Activated T-helper 2 cell treated with anti-CD3 and anti-CD28 coated beads, Interferon-gamma antibody, Interleukin-2, Interleukin-4, amounts not matched to agents 10 μg/mL and 5 μg/mL and 100 μg/mL, durations not matched to agents 14 hours and 24 hours and 36 hours (primary cell): ENCODE measurements at regions of chr12 and their contacts with region 1.

Region 1: GRCh38 chr12:121399391-121400331 is at the start of gene RNF34:
- DNase-seq: peak; percentile 99
- H3K4me3 Mint-ChIP-seq: peak within 1 kb of the TSS; percentile 97
- H3K27ac Mint-ChIP-seq: peak within 1 kb of the TSS; percentile 96
- H3K4me1 Mint-ChIP-seq: peaks cover 31% of the 10 kb centered on the region
- H3K27me3 Mint-ChIP-seq: no peaks in the 10 kb centered on the region
- total RNA-seq, gene RNF34: 74.1 and 78.3 TPM in 2 replicates

Region 2: GRCh38 chr12:121223292-121224285 is 176.1 kb before region 1 on chr12:
- intact Hi-C with region 1: no loop called
- DNase-seq: peak; percentile 46
- H3K4me3 Mint-ChIP-seq: peak overlapping the region; percentile 2
- H3K27ac Mint-ChIP-seq: peak overlapping the region; percentile 84
- H3K4me1 Mint-ChIP-seq: peaks cover 32% of the 10 kb centered on the region
- H3K27me3 Mint-ChIP-seq: no peaks in the 10 kb centered on the region

Region 3: DNA sequence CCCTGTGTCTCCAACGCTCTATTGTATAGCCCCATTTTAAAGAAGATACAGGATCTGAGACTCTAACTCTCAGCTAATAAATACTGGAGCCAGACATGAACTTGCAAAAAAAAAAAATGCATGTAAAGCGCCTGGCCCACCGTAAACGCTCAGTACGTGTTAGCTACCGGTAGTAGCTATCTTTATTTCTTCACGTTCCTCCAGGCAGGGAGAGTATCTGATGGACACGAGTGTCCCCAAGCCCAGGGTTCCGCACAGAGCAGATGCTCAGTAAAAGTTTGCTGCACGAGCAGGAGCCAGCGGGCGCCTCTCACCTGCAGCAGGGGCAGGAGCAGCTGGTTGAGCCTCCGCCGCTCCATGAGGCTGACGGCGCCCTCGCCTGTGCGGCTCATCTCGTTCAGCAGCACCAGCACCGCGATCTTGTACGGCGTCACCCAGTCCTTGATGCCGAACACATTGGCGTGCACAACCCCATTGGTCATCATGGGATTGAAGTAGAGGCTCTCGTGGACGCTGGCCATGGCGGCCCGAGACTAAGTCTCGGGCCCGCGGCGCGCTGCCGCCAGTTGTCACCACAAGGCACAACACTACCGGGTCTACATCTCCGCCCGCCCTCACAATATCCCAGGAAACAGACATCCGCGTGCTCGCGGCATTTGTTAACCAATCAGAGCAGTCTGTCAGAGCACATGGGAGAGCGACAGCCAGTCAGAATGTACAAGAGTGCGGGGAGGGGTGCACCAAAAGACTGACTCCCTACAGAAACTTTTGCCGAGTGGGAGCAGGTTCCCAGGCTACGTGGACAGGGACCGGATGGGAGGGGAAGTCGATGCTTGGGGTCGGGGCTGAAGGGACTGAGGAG is 47.6 kb before region 1 on chr12 and contains the start of gene ANAPC5:
- intact Hi-C with region 1: loop called (anchors 1 kb)
- DNase-seq: peak; percentile 92
- H3K4me3 Mint-ChIP-seq: peak within 1 kb of the TSS; percentile 95
- H3K27ac Mint-ChIP-seq: peak within 1 kb of the TSS; percentile 97
- H3K4me1 Mint-ChIP-seq: peaks cover 20% of the 10 kb centered on the region
- H3K27me3 Mint-ChIP-seq: peaks cover under 1% of the 10 kb centered on the region
- total RNA-seq, gene ANAPC5: 132 and 135 TPM in 2 replicates

Region 4: DNA sequence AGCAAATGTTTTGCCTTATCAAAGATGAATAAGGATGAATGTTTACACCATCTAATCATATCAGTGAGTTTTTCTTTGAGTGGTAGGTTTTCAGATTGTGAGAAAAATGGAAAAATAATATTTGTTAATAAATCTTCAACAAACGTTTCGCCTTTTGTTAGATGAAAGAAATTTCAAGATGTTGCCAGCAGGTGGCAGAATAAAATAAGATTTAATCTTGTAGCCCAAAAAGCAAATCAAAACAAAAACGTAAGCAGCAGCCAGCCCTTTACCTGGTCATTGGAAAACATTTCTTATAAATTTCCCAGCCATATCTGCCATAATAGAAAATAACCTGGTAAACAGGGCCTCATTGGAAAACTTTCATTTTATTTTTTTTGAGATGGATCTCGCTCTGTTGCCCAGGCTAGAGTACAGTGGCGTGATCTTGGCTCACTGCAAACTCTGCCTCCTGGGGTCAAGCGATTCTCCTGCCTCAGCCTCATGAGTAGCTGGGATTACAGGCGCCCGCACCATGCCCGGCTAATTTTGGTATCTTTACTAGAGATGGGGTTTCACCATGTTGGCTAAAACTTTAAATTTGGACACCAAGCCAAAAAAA is 297.5 kb after region 1 on chr12:
- intact Hi-C with region 1: no loop called
- DNase-seq: no peak
- H3K4me3 Mint-ChIP-seq: no peak overlapping the region
- H3K27ac Mint-ChIP-seq: no peak overlapping the region
- H3K4me1 Mint-ChIP-seq: peaks cover 1% of the 10 kb centered on the region
- H3K27me3 Mint-ChIP-seq: peaks cover 6% of the 10 kb centered on the region

Region 5: DNA sequence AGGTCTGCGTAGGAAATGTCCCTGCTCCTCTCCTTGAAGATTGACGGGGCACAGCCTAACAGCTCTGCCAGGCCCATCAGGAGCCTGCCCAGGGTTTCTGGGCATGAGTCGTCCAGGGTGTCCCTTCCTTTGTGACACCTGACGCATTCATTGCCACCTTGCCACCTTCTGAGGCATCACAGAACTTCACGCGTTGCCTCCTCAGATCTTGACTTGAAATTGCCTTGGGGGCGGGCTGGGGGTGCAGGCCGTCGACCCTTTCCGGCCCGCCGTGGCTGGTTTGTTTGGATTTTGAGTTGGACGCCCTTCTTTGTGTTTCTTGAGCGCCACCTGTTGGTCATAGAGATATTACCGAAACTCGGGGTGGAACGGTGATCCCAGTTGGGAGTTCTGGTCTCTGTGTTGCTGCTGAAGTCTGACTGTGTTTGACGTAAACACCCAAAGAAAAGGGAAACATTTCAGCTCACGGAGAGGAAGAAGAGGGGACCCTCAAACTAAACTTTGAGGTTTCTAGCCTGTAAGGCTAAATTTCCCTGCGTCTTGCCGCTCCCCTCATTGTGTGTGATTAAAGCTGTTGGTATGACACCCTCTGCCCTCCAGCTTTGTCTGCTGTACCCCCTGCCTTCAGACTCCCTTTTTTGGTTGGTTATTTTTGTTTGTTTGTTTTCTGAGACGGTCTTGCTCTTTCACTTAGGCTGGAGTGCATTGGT is 723.5 kb after region 1 on chr12:
- intact Hi-C with region 1: no loop called
- DNase-seq: peak; percentile 54
- H3K4me3 Mint-ChIP-seq: no peak overlapping the region
- H3K27ac Mint-ChIP-seq: no peak overlapping the region
- H3K4me1 Mint-ChIP-seq: peaks cover 10% of the 10 kb centered on the region
- H3K27me3 Mint-ChIP-seq: no peaks in the 10 kb centered on the region